ENCODE measurements at regions of chr19 and their contacts with region 1.

Region 1: DNA sequence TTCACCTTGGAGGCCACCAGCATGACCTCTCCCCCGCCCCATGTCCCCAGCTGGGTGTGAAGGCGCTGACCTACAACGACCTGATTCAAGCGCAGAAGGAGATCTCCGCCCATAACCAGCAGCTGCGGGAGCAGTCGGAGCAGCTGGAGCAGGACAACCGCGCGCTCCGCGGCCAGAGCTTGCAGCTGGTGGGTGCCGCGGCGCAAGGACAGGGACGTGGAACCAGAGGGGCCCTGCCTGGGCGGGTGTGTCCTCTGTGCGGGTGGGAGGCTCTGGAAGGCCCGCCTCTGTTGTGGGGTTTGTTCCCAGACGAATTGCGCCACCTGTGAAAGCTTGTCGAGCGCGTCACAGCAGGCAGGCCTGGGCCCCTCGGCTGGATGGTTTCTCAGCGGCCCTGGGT is 22.3 kb downstream of the PLEKHJ1 start:
- DNase-seq: no peak
- H3K4me3 ChIP-seq: no peak overlapping the region
- H3K27ac ChIP-seq: no peak overlapping the region
- H3K4me1 ChIP-seq: no peaks in the 10 kb centered on the region
- H3K27me3 ChIP-seq: no peaks in the 10 kb centered on the region
- CTCF ChIP-seq: no peak

Region 2: DNA sequence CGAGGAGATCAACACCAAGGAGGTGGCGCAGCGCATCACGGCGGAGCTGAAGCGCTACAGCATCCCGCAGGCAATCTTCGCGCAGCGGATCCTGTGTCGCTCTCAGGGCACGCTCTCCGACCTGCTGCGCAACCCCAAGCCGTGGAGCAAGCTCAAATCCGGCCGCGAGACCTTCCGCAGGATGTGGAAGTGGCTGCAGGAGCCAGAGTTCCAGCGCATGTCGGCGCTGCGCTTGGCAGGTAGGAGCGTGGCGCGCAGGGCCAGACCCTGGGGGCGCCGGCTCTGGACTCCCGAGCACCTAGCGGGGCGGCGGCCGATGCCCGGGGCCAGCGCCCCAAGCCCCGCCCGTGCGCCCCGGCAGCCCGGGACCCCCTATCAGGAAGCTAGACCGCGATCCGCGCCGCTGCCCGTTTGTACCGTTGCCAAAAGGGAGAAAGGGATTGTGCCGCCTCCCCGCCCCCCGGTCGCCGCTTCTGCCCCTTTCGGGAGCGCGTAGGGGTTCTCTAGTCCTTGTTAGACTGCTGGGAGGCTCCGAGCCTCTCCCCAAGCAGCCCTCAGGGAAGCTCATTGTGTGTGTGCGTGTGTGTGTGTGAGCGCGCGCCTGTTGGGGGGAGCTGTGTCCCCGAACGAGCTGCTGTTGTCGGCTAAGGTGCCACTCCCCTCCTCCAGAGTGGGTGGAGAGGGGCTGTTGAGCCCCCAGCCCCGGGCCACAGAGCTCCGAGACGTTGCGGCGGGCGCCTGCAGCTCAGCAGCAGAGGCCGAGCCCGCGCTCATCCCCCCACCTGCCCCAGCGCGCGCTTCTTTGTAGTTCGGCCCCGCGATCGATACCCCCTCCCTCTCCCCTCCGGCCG is 459.0 kb before region 1 on chr19:
- CTCF ChIA-PET with region 1: no interaction called
- POLR2A ChIA-PET with region 1: no interaction called
- intact Hi-C with region 1: no loop called
- DNase-seq: no peak
- H3K4me3 ChIP-seq: peak overlapping the region; percentile 47; the same call in 1 of the 2 replicates
- H3K27ac ChIP-seq: no peak overlapping the region
- H3K4me1 ChIP-seq: no peaks in the 10 kb centered on the region; the same call in 1 of the 2 replicates
- H3K27me3 ChIP-seq: peaks cover 3% of the 10 kb centered on the region; the same call in 1 of the 2 replicates
- CTCF ChIP-seq: no peak

Region 3: GRCh38 chr19:2157452-2157851 is 56.3 kb before region 1 on chr19:
- CTCF ChIA-PET with region 1: no interaction called
- POLR2A ChIA-PET with region 1: interaction called, 8 read pairs
- intact Hi-C with region 1: loop called (anchors 2 kb)
- DNase-seq: no peak
- H3K4me3 ChIP-seq: no peak overlapping the region
- H3K27ac ChIP-seq: no peak overlapping the region
- H3K4me1 ChIP-seq: peaks cover 34% of the 10 kb centered on the region
- H3K27me3 ChIP-seq: no peaks in the 10 kb centered on the region
- CTCF ChIP-seq: no peak

Region 4: GRCh38 chr19:2239771-2240770 is 26.3 kb after region 1 on chr19:
- CTCF ChIA-PET with region 1: no interaction called
- POLR2A ChIA-PET with region 1: no interaction called
- intact Hi-C with region 1: no loop called
- DNase-seq: no peak
- H3K4me3 ChIP-seq: peak overlapping the region; percentile 26; the same call in 1 of the 2 replicates
- H3K27ac ChIP-seq: 0 out of 2 replicates have a peak overlapping the region, but pooled peaks have one; percentile 12
- H3K4me1 ChIP-seq: peaks cover 15% of the 10 kb centered on the region
- H3K27me3 ChIP-seq: no peaks in the 10 kb centered on the region
- CTCF ChIP-seq: no peak

Measured in PC-9 (cell line).